GM10248 (cell line): ENCODE measurements at regions of chr10 and their contacts with region 1.

Region 1: DNA sequence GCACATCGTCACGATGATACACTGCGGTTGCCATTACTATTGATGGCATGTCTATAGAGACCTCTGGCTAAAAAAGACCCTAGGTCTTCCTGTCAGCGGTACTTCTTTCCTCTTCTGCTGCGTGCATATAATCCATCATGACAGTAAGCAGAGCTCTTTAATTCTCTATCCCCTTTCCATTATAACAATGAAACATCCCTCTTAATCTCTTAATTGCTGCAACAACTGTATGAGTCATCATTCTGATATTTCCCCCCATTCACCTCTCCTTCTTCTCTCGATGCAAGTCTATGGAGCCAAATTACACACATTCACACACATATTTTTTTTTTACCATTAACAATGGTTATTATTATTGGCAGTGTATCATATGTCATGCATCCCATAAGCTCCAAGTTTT is 45.2 kb upstream of the AKR1E2 start:
- DNase-seq: no peak
- CTCF ChIP-seq: no peak

Region 2: DNA sequence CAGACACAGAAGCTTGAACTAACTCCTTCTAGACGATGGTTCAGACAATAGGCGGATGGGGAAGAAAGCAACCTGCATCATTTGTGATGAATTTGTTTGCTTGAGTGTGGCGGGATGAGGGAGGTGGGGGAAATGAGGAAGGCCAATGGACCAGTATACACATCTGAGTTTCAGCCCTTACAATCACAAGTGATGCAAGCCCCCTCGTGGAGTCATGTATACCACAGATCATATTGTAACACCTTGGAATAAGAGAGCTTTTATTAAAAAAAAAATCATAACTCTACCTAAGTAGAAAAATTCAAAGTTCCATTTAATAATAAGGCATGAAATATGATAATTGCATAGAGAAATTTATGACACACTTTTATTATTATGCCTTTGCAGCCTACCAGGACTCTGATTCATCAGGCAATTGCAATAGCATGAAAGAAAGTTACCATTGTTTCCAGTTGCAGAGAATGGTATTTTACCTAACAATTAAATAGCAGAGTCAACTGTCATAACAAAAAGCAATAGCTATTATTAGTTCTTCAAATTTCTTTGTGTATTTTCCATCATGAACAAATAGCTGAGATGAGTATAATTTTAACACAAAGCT is 185.0 kb before region 1 on chr10:
- CTCF ChIA-PET with region 1: no interaction called
- POLR2A ChIA-PET with region 1: no interaction called
- DNase-seq: no peak
- CTCF ChIP-seq: no peak

Region 3: GRCh38 chr10:4767033-4767814 is 13.6 kb before region 1 on chr10:
- CTCF ChIA-PET with region 1: interaction called, 10 read pairs
- POLR2A ChIA-PET with region 1: no interaction called
- DNase-seq: no peak
- CTCF ChIP-seq: peak; percentile 42

Region 4: GRCh38 chr10:4825851-4826665 is 45.3 kb after region 1 on chr10 and contains the start of gene AKR1E2:
- CTCF ChIA-PET with region 1: no interaction called
- POLR2A ChIA-PET with region 1: no interaction called
- DNase-seq: peak; percentile 39
- CTCF ChIP-seq: no peak